ENCODE measurements at regions of chrX and their contacts with region 1.

Region 1: GRCh38 chrX:77910108-77910840 is at the start of gene ATP7A:
- DNase-seq: peak; percentile 87 to 92 (median 92)
- H3K4me3 ChIP-seq: peak within 1 kb of the TSS; percentile 78 to 98 (median 87)
- H3K4me3 Mint-ChIP-seq: peak within 1 kb of the TSS; percentile 97 to 100
- H3K27ac ChIP-seq: peak within 1 kb of the TSS; percentile 67 to 89
- H3K27ac Mint-ChIP-seq: peak within 1 kb of the TSS; percentile 92 to 99 (median 96)
- H3K4me1 ChIP-seq: peaks cover 14 to 16% of the 10 kb centered on the region in 2 donors
- H3K4me1 Mint-ChIP-seq: peaks cover 20% of the 10 kb centered on the region
- H3K27me3 ChIP-seq: no peaks in the 10 kb centered on the region
- H3K27me3 Mint-ChIP-seq: no peaks in the 10 kb centered on the region
- CTCF ChIP-seq: peak; percentile 59
- polyA plus RNA-seq, gene ATP7A: 2.3 to 3.8 (median 2.8) TPM

Region 2: GRCh38 chrX:77949840-77950239 is 39.6 kb after region 1 on chrX:
- intact Hi-C with region 1: no loop called
- DNase-seq: no peak
- H3K4me3 ChIP-seq: no peak overlapping the region
- H3K4me3 Mint-ChIP-seq: no peak overlapping the region
- H3K27ac ChIP-seq: no peak overlapping the region
- H3K27ac Mint-ChIP-seq: no peak overlapping the region
- H3K4me1 ChIP-seq: peaks cover 13 to 16% of the 10 kb centered on the region in 2 donors
- H3K4me1 Mint-ChIP-seq: peaks cover 10% of the 10 kb centered on the region
- H3K27me3 ChIP-seq: no peaks in the 10 kb centered on the region
- H3K27me3 Mint-ChIP-seq: no peaks in the 10 kb centered on the region
- CTCF ChIP-seq: no peak

Region 3: DNA sequence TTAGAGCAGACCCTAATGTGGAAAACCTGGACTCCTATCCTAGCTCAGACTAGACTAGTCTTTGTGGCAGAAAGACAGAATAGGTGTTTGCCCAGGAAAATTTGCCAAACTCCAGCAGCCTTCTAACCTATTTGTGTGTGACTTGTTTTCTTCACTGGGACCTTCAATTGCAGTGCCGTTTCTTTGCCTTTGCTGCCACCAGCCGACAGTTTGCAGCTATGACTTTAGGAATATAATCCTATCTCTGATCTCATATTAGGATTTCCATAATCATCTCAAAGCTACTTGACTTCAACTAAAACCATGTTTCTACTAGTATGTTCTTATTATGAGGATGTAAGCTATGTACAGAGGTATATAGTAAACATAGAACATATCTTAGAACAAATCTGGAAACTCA is 119.4 kb after region 1 on chrX:
- intact Hi-C with region 1: loop called (anchors 10 kb)
- DNase-seq: peak in 2 of 3 donors; percentile 0 to 3
- H3K4me3 ChIP-seq: no peak overlapping the region
- H3K4me3 Mint-ChIP-seq: no peak overlapping the region
- H3K27ac ChIP-seq: no peak overlapping the region
- H3K27ac Mint-ChIP-seq: no peak overlapping the region
- H3K4me1 ChIP-seq: no peaks in the 10 kb centered on the region
- H3K4me1 Mint-ChIP-seq: peaks cover 1% of the 10 kb centered on the region
- H3K27me3 ChIP-seq: no peaks in the 10 kb centered on the region
- H3K27me3 Mint-ChIP-seq: peaks cover 0 to 1% (median 0%) of the 10 kb centered on the region in 3 donors
- CTCF ChIP-seq: peak; percentile 21

Region 4: GRCh38 chrX:78104447-78105185 is 194.3 kb after region 1 on chrX:
- intact Hi-C with region 1: loop called in 1 of 2 experiments (anchors 5 kb)
- DNase-seq: peak; percentile 76 to 83 (median 77)
- H3K4me3 ChIP-seq: peak overlapping the region; percentile 82 to 97 (median 93)
- H3K4me3 Mint-ChIP-seq: peak overlapping the region; percentile 83 to 86
- H3K27ac ChIP-seq: peak overlapping the region; percentile 96 to 99
- H3K27ac Mint-ChIP-seq: peak overlapping the region; percentile 95 to 98 (median 97)
- H3K4me1 ChIP-seq: peaks cover 44 to 48% of the 10 kb centered on the region in 2 donors
- H3K4me1 Mint-ChIP-seq: peaks cover 53% of the 10 kb centered on the region
- H3K27me3 ChIP-seq: no peaks in the 10 kb centered on the region
- H3K27me3 Mint-ChIP-seq: peaks cover 0 to 2% (median 0%) of the 10 kb centered on the region in 3 donors
- CTCF ChIP-seq: no peak